ENCODE measurements at regions of chr20 and their contacts with region 1.

Region 1: DNA sequence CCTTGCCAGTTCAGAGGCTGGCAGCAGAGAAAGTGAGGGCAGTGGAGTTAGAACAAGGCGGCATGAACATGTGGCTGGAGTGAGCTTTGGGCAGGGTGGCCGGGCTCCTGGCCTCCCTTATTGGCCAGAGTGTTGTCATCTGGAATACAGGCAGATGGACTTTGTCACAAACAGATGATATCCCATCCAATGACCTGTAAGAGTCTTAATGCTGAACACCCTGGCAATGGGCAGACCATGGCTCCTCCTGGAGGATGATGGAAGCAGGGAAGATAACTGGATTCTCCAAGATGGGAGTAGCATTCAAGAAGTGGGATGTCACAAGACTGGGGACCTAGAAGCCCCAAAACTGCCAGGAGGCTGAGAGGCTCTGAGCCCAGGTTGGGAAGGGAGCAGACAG is 242.1 kb downstream of the MAFB start:
- DNase-seq: no peak
- ATAC-seq: no peak
- H3K4me3 Mint-ChIP-seq: no peak overlapping the region
- H3K27ac Mint-ChIP-seq: no peak overlapping the region
- H3K4me1 Mint-ChIP-seq: no peaks in the 10 kb centered on the region
- H3K27me3 Mint-ChIP-seq: peaks cover 10% of the 10 kb centered on the region

Region 2: DNA sequence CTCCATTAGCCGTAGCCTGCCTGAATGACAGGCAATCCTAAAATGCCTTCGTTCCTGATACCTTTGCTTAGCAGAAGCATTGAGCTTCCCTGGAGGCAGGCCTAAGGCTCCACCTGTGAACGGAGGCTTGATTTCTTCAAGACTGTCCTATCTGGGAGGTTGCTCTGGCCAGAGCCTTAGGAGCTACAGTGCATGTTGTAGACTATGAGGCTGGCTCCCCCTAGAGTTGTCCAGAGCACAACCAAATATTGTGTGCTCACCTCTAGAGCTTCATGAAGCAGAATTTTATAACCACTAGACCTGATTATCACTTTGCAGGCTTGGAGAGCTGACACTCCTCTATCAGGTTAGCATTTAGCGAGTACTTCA is 24.4 kb after region 1 on chr20:
- CTCF ChIA-PET with region 1: no interaction called
- POLR2A ChIA-PET with region 1: no interaction called
- intact Hi-C with region 1: loop called in 1 of 2 experiments (anchors 1 kb)
- DNase-seq: no peak
- ATAC-seq: no peak
- H3K4me3 Mint-ChIP-seq: no peak overlapping the region
- H3K27ac Mint-ChIP-seq: no peak overlapping the region
- H3K4me1 Mint-ChIP-seq: no peaks in the 10 kb centered on the region
- H3K27me3 Mint-ChIP-seq: no peaks in the 10 kb centered on the region